ENCODE measurements at regions of chr13 and their contacts with region 1.

Region 1: DNA sequence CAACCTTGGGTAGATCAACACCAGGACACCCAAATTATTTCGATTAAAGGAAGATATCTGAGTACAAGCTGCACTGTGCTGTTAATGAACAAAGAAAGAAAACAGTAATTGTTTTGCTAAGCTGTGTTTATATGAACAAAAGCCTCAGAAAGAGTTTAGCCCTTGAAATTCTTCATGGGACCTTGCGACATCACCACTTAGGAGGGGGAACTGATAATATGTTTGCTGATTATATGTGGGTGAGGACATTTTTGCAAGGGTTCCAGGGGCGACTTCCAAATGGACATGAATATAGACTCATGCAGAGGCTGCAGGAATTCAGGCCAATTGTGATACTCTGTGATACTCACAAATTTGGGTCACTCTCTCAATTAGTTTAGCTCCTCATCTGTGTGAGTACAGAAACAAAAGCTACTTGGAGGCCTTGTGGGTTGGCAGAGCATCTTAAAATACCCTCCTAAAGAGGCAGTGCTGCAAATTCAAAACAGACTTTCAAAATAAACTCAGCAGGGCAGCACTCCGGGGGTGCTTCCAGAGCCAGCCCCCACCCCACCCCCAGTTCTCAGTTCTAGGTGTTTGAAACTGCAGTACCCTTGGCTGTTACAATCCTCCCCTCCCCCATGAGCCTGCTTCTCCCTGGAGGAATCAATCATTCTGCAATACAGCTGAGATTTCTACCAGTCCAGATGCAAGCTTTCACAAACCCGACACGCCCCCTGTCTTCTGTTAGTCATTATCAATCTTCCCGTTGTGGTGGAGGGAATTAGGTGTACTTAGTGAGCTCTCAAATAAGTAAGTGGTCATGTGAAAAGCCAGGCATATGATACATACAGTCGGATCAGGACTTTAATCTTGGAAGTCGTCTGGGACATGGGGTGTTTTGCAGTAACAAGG is 97.0 kb upstream of the MBNL2 start:
- DNase-seq: peak; percentile 44
- H3K4me3 Mint-ChIP-seq: no peak overlapping the region
- H3K27ac Mint-ChIP-seq: no peak overlapping the region
- H3K4me1 Mint-ChIP-seq: peaks cover 18% of the 10 kb centered on the region
- H3K27me3 Mint-ChIP-seq: peaks cover 24% of the 10 kb centered on the region

Region 2: GRCh38 chr13:95896302-95896701 is 1228.9 kb before region 1 on chr13:
- CTCF ChIA-PET with region 1: no interaction called
- intact Hi-C with region 1: no loop called
- DNase-seq: no peak
- H3K4me3 Mint-ChIP-seq: no peak overlapping the region
- H3K27ac Mint-ChIP-seq: no peak overlapping the region
- H3K4me1 Mint-ChIP-seq: no peaks in the 10 kb centered on the region
- H3K27me3 Mint-ChIP-seq: no peaks in the 10 kb centered on the region

Region 3: DNA sequence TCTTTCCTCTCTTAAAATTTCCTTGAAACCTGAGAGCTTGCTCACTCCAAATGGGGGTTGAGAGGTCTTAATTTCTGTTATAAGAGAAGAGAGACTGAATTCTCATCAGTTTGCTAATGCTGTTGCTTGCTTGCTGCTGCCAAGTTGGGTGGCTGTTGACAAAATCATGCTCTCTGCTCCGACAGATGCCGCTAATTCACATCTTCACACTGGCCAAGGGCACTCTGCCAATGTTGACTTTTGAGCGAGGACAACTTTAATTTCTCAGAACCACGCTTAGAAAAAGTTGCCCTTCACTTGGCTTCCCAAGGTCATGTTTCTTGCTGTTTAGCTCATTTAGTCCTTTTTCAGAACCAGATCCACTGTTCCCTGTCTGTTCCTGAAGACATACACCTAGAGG is 632.4 kb before region 1 on chr13:
- CTCF ChIA-PET with region 1: no interaction called
- intact Hi-C with region 1: no loop called
- DNase-seq: no peak
- H3K4me3 Mint-ChIP-seq: no peak overlapping the region
- H3K27ac Mint-ChIP-seq: no peak overlapping the region
- H3K4me1 Mint-ChIP-seq: no peaks in the 10 kb centered on the region
- H3K27me3 Mint-ChIP-seq: no peaks in the 10 kb centered on the region

Region 4: DNA sequence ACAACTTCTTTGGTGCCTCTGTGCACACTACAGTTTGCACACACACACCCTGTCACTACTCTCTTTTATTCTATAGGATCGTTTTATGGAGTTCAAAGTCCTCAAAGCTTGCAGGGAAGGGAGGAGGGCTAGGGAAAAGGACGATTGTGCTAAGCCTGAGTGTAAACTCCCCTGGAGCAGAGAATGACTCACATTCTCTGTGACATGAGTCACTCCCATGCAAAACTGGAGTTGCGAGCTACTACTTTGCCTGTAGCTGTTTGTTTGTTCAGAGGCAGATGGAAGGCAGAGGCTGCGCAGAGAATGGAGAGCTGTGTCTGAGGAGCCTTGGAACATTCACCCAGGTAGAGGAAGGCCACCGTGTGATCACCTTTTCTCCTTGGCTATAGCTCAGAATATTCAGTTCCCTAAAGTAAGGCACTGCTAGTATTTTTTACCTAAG is 16.4 kb after region 1 on chr13:
- CTCF ChIA-PET with region 1: interaction called, 6 read pairs
- intact Hi-C with region 1: loop called (anchors 1 kb)
- DNase-seq: peak; percentile 57
- H3K4me3 Mint-ChIP-seq: no peak overlapping the region
- H3K27ac Mint-ChIP-seq: no peak overlapping the region
- H3K4me1 Mint-ChIP-seq: peaks cover 11% of the 10 kb centered on the region
- H3K27me3 Mint-ChIP-seq: peaks cover 12% of the 10 kb centered on the region

Region 5: DNA sequence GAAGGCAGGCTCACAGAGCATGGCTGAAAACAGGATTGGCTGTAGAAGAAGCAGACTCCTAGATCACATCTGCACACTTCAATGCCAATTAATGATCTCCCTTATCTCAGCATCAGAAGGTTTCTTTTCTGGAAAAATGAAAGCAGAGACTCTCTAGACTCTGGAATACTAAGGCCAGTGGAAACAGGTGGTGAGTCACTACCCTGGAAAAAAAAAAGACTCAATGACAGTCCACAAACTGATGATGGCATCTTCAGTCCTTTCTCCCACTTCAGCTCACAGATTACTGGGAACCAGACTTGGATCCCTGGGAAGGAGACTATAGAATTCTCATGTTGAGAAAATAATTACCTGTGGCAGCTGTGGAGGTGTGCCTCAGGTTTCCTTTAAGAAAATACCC is 49.5 kb after region 1 on chr13:
- CTCF ChIA-PET with region 1: no interaction called
- intact Hi-C with region 1: no loop called
- DNase-seq: no peak
- H3K4me3 Mint-ChIP-seq: no peak overlapping the region
- H3K27ac Mint-ChIP-seq: no peak overlapping the region
- H3K4me1 Mint-ChIP-seq: no peaks in the 10 kb centered on the region
- H3K27me3 Mint-ChIP-seq: peaks cover 4% of the 10 kb centered on the region

Region 6: GRCh38 chr13:97257800-97258799 is 132.9 kb after region 1 on chr13:
- CTCF ChIA-PET with region 1: no interaction called
- intact Hi-C with region 1: loop called (anchors 1 kb)
- DNase-seq: no peak
- H3K4me3 Mint-ChIP-seq: no peak overlapping the region
- H3K27ac Mint-ChIP-seq: no peak overlapping the region
- H3K4me1 Mint-ChIP-seq: peaks cover 74% of the 10 kb centered on the region
- H3K27me3 Mint-ChIP-seq: no peaks in the 10 kb centered on the region

Region 7: GRCh38 chr13:97295283-97296182 is 170.4 kb after region 1 on chr13:
- CTCF ChIA-PET with region 1: no interaction called
- intact Hi-C with region 1: loop called (anchors 1 kb)
- DNase-seq: no peak
- H3K4me3 Mint-ChIP-seq: no peak overlapping the region
- H3K27ac Mint-ChIP-seq: no peak overlapping the region
- H3K4me1 Mint-ChIP-seq: peaks cover 31% of the 10 kb centered on the region
- H3K27me3 Mint-ChIP-seq: no peaks in the 10 kb centered on the region

Region 8: DNA sequence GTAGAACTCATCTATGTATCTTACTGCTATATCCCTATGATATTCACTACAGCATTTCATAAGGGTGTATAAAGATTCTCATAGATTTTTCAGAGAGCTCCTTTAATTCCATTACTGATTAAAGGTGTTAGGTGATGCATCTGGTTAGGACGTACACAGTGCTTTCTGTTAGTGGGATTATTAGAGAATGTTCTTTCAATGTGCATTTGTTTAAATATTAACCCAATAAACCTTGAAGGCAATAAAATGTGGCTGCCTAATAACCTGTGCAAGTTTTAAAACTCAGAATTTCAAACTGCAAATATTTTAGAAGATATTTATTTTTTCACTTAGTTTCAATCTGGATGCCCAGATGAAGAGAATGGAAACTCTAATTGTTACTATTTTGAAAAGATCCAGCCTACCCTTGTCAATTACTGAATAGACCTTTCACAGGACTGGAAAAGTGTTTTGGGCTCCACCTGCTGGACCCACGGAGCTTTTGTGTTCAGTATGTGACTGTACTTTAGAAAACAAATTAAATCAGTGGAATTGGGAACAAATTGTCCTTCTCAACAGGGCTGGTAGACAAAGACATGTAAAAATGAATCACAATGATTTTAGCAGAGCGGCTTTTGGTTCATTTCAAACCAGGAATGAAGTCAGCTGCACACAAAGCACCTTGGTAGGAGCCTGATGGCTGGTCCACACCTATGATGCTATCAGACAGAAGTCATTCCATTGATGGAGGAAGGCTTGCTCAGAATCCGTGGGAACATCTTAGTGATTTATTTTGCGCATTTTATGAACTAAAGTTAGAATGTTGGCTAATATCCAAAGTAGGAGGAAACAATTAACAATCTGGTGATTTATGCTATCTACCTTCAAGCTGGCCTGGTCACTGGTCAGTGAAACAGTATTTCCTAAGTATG is 219.4 kb after region 1 on chr13:
- CTCF ChIA-PET with region 1: no interaction called
- intact Hi-C with region 1: loop called (anchors 1 kb)
- DNase-seq: peak; percentile 72
- H3K4me3 Mint-ChIP-seq: no peak overlapping the region
- H3K27ac Mint-ChIP-seq: no peak overlapping the region
- H3K4me1 Mint-ChIP-seq: peaks cover 6% of the 10 kb centered on the region
- H3K27me3 Mint-ChIP-seq: no peaks in the 10 kb centered on the region

Region 9: DNA sequence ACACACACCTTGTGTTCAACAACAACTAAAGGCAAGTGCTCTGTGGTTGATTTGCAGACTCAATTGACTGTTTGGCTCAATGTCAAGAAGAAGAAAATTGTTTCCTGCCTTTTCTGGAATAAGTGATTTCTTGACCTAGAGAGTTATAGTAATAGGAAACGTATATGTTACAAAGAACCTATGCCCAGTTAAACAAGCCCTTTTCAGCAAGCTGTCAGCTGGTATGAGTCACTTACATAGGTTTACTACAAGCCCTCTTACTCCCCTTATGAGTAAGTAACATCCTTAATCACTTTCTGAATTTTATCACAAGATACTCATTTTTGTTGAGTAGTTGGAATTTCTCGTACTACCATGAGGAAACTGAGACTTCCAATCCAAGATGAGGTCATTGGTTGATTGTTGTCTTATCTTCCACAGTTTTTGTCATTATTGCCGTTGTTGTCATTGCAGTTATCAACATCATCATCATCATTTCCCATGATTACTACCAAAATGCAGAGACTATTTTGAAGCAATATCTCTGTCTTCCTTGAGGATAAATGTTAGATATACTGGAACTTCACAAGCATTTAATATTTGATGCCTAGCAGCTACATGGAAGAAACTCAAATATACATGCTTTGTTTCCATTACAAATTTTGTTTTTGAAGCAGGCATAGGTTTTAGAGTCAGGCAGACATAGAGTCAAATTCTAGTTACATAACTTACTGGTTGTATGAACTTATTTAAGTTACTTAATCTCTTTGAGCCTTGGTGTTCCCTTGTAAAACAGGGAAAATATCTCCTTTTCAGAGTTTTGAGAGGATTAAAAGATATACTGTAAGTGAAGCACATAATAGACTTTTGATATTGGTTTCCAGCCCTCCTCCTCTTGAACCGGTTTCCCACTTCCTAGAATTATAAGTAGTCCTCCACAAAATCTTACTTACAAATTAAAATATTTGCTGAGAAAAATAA is 414.8 kb after region 1 on chr13:
- CTCF ChIA-PET with region 1: no interaction called
- intact Hi-C with region 1: loop called (anchors 5 kb)
- DNase-seq: no peak
- H3K4me3 Mint-ChIP-seq: no peak overlapping the region
- H3K27ac Mint-ChIP-seq: no peak overlapping the region
- H3K4me1 Mint-ChIP-seq: peaks cover 4% of the 10 kb centered on the region
- H3K27me3 Mint-ChIP-seq: peaks cover 4% of the 10 kb centered on the region

Region 10: GRCh38 chr13:97975848-97976609 is 850.9 kb after region 1 on chr13:
- CTCF ChIA-PET with region 1: no interaction called
- intact Hi-C with region 1: loop called (anchors 10 kb)
- DNase-seq: peak; percentile 89
- H3K4me3 Mint-ChIP-seq: peak overlapping the region; percentile 92
- H3K27ac Mint-ChIP-seq: peak overlapping the region; percentile 97
- H3K4me1 Mint-ChIP-seq: peaks cover 28% of the 10 kb centered on the region
- H3K27me3 Mint-ChIP-seq: no peaks in the 10 kb centered on the region

Measured in activated naive CD4-positive, alpha-beta T cell treated with anti-CD3 and anti-CD28 coated beads for 36 hours (primary cell).